PC-3 (cell line): ENCODE measurements at regions of chr12 and their contacts with region 1.

Region 1: GRCh38 chr12:45284131-45284901 is 68.4 kb downstream of the ANO6 start:
- DNase-seq: peak; percentile 81
- ATAC-seq: peak; percentile 94
- H3K4me3 ChIP-seq: peak overlapping the region; percentile 22
- H3K27ac ChIP-seq: peak overlapping the region; percentile 78
- H3K4me1 ChIP-seq: peaks cover 23% of the 10 kb centered on the region
- H3K27me3 ChIP-seq: no peaks in the 10 kb centered on the region
- CTCF ChIP-seq: no peak

Region 2: GRCh38 chr12:45324391-45324790 is 40.1 kb after region 1 on chr12:
- CTCF ChIA-PET with region 1: no interaction called
- POLR2A ChIA-PET with region 1: no interaction called
- intact Hi-C with region 1: loop called (anchors 5 kb)
- DNase-seq: no peak
- ATAC-seq: no peak
- H3K4me3 ChIP-seq: no peak overlapping the region
- H3K27ac ChIP-seq: no peak overlapping the region
- H3K4me1 ChIP-seq: peaks cover 14% of the 10 kb centered on the region
- H3K27me3 ChIP-seq: no peaks in the 10 kb centered on the region
- CTCF ChIP-seq: no peak

Region 3: DNA sequence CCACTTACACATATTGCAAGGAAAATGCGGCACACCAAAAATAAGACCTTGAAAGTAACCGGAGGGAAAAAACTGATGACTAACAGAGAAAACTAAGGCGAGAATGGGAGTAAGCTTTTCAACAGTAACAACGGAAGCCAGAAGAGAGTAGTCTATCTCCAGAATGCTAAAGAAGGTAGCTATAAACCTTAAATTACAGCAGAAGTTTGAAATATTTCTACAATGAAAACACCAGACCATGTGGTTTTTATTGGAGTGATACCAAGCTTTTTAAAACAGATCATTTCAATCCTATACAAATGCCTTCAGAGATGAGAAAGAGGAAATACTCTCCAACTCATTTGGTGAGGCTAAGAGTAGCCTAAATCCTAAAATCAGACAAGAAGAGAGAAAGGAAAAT is 141.1 kb after region 1 on chr12:
- CTCF ChIA-PET with region 1: no interaction called
- POLR2A ChIA-PET with region 1: no interaction called
- intact Hi-C with region 1: no loop called
- DNase-seq: no peak
- ATAC-seq: no peak
- H3K4me3 ChIP-seq: no peak overlapping the region
- H3K27ac ChIP-seq: no peak overlapping the region
- H3K4me1 ChIP-seq: no peaks in the 10 kb centered on the region
- H3K27me3 ChIP-seq: no peaks in the 10 kb centered on the region
- CTCF ChIP-seq: no peak